HAP-1 (cell line): ENCODE measurements at regions of chr10 and their contacts with region 1.

Region 1: GRCh38 chr10:125719146-125720001 is at the start of gene EDRF1:
- DNase-seq: peak; percentile 98 to 99
- H3K4me3 ChIP-seq: peak within 1 kb of the TSS; percentile 96
- H3K4me1 ChIP-seq: no peaks in the 10 kb centered on the region; the same call in 1 of the 2 replicates
- H3K27me3 ChIP-seq: no peaks in the 10 kb centered on the region

Region 2: DNA sequence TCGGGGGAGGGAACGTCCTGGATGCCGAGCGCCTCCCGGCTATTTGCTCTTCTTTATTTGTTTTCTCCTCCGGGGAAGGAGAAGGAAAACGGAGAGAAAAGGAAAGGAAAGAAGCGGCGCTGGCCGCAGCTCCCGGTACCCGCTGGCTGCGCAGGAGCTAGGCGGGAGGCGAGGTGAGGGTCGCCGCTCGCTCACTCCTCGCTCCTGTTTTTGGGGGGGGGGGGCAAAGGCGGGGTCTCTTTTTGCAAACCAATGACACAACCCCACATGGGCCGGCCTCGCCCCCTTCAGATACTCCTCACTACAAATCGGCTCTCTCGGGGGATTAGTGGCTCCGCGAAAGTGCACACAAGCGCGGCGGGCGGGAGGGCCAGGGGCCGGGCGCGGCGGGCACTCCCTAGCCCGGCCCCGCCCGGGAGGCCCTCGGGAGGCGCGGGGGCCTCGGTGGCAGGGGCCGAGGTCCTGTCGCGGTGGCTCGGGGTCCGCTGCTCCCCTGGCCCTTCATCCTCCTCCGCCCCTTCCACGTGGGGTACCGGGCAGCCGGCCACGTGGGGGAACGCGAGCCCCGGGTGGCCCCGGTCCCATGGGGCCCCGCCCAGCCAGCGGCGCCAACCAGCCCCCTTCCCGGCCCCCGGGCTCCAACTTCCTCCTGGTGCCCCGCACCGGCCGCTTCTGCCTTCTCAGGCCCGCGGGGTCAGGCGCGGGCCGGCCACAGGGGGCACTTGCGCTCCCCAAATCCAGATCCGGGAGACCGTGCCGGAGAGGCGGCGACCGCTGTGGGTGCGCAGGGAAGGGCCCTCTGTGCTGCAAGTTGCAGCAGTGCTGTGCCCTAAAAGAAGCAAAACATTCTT is 558.3 kb before region 1 on chr10:
- in situ Hi-C with region 1: loop called (anchors 25 kb)
- DNase-seq: peak; percentile 87 to 94
- H3K4me3 ChIP-seq: peak overlapping the region; percentile 53
- H3K4me1 ChIP-seq: peaks cover 27% of the 10 kb centered on the region
- H3K27me3 ChIP-seq: no peaks in the 10 kb centered on the region

Region 3: DNA sequence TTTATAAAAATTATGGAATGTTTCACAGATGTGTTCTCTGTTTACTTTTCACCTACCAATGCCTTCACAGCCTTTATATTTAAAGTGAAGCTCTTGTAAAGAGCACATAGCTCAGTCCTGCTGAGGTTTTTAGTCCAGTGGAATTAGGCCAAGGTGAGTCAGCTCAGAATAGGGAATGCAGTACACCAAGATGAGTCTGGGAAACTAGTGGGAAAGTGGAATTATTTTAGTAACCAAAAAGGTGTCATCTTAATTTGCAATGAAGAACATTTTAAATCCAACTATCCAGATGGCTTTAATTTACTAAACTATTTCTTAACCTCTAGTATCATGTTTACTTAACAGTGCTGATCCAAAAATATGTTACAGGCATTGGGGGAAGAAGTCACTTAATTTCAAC is 322.7 kb before region 1 on chr10:
- in situ Hi-C with region 1: no loop called
- DNase-seq: no peak
- H3K4me3 ChIP-seq: no peak overlapping the region
- H3K4me1 ChIP-seq: no peaks in the 10 kb centered on the region
- H3K27me3 ChIP-seq: no peaks in the 10 kb centered on the region